IMR-90 (cell line): ENCODE measurements at regions of chr6 and their contacts with region 1.

Region 1: GRCh38 chr6:100116411-100117194 is 122.6 kb upstream of the MCHR2 start:
- DNase-seq: peak; percentile 76
- ATAC-seq: peak; percentile 88
- H3K4me3 ChIP-seq: no peak overlapping the region
- H3K27ac ChIP-seq: no peak overlapping the region
- H3K4me1 ChIP-seq: no peaks in the 10 kb centered on the region
- H3K27me3 ChIP-seq: peaks cover 47% of the 10 kb centered on the region
- CTCF ChIP-seq: peak; percentile 87
- POLR2A ChIP-seq: peak; percentile 30; the same call in 1 of the 2 replicates
- RAD21 ChIP-seq: peak; percentile 94

Region 2: GRCh38 chr6:100228831-100229641 is 112.4 kb after region 1 on chr6:
- CTCF ChIA-PET with region 1: no interaction called
- POLR2A ChIA-PET with region 1: no interaction called
- dilution Hi-C with region 1: no loop called
- in situ Hi-C with region 1: no loop called
- intact Hi-C with region 1: loop called (anchors 10 kb)
- DNase-seq: peak; percentile 57
- ATAC-seq: peak; percentile 98
- H3K4me3 ChIP-seq: peak overlapping the region; percentile 63
- H3K27ac ChIP-seq: peak overlapping the region; percentile 76
- H3K4me1 ChIP-seq: peaks cover 2% of the 10 kb centered on the region; the same call in 1 of the 2 replicates
- H3K27me3 ChIP-seq: no peaks in the 10 kb centered on the region
- CTCF ChIP-seq: peak; percentile 16; the same call in 1 of the 2 replicates
- POLR2A ChIP-seq: no peak
- RAD21 ChIP-seq: no peak

Region 3: GRCh38 chr6:100246206-100246605 is 129.6 kb after region 1 on chr6:
- CTCF ChIA-PET with region 1: no interaction called
- POLR2A ChIA-PET with region 1: no interaction called
- dilution Hi-C with region 1: no loop called
- in situ Hi-C with region 1: no loop called
- intact Hi-C with region 1: no loop called
- DNase-seq: no peak
- ATAC-seq: no peak
- H3K4me3 ChIP-seq: no peak overlapping the region
- H3K27ac ChIP-seq: no peak overlapping the region
- H3K4me1 ChIP-seq: no peaks in the 10 kb centered on the region
- H3K27me3 ChIP-seq: no peaks in the 10 kb centered on the region
- CTCF ChIP-seq: no peak
- POLR2A ChIP-seq: no peak
- RAD21 ChIP-seq: no peak

Region 4: DNA sequence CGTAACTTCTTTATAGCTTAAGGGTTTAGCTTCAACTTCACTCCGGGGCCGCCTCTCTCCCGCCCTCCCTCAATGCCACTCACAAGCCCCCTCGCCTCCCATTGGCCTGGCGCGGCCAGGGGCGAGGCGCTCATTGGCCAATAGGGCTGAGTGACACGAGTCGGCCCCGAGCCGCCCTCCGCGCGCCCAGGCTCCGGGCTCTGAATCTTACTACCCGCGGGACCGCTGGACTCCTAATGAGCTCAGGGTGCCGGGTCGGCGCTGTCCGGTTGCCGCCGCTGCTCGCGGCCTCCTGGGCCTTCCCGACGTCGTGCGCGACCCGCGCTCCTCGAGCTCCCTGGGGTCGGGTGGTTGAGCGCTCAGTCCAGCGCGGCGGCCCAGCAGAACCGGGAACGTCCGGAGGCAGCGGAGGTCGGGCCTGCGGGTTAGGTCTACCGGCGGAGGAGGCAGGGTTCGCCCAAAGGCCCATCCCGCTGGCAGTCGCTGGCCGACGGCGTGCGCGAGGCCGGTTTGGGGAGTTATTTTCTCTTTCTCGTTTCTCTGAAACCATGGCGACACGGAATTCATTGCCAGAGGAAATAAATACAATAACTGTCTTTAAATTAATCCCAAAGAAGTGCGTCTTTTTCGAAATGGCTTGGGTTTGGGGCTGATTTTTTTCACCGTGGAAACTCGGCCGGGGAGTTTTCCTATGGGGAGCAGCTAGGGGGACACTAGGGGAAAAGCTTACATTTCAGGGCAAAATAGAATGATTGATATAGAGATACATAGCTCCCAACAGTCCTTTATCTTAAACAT is 348.5 kb after region 1 on chr6 and contains the start of gene SIM1:
- CTCF ChIA-PET with region 1: interaction called, 6 read pairs
- POLR2A ChIA-PET with region 1: no interaction called
- dilution Hi-C with region 1: loop called (anchors 25 kb)
- in situ Hi-C with region 1: no loop called
- intact Hi-C with region 1: no loop called
- DNase-seq: peak; percentile 59
- ATAC-seq: peak; percentile 92
- H3K4me3 ChIP-seq: peak within 1 kb of the TSS; percentile 41
- H3K27ac ChIP-seq: no peak within 1 kb of the TSS
- H3K4me1 ChIP-seq: peaks cover 5% of the 10 kb centered on the region; the same call in 1 of the 2 replicates
- H3K27me3 ChIP-seq: peaks cover 95% of the 10 kb centered on the region
- CTCF ChIP-seq: no peak
- POLR2A ChIP-seq: no peak
- RAD21 ChIP-seq: no peak
- total RNA-seq, gene SIM1: not detected in 2 replicates

Region 5: DNA sequence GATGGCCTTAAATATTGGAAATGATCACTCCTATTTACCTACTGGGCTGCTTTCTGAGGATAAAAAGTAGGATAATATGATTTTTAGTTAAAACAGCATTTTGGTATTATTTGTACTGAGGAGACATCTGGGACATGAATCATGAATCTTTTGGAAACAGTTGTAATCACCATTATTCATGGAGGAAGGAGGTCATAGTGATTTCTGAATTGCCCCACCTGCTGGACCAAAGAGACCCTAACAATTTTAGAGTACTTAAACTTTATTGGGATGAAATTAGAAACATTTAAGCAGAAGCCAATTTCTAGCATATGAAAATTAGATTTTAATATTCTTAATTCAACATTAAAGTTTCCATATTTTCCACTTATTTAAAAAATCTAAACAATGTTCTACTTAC is 456.6 kb after region 1 on chr6:
- CTCF ChIA-PET with region 1: no interaction called
- POLR2A ChIA-PET with region 1: no interaction called
- dilution Hi-C with region 1: no loop called
- in situ Hi-C with region 1: no loop called
- intact Hi-C with region 1: loop called (anchors 1 kb)
- DNase-seq: peak; percentile 65
- ATAC-seq: no peak
- H3K4me3 ChIP-seq: no peak overlapping the region
- H3K27ac ChIP-seq: no peak overlapping the region
- H3K4me1 ChIP-seq: no peaks in the 10 kb centered on the region
- H3K27me3 ChIP-seq: no peaks in the 10 kb centered on the region
- CTCF ChIP-seq: peak; percentile 54
- POLR2A ChIP-seq: no peak
- RAD21 ChIP-seq: peak; percentile 41

Region 6: DNA sequence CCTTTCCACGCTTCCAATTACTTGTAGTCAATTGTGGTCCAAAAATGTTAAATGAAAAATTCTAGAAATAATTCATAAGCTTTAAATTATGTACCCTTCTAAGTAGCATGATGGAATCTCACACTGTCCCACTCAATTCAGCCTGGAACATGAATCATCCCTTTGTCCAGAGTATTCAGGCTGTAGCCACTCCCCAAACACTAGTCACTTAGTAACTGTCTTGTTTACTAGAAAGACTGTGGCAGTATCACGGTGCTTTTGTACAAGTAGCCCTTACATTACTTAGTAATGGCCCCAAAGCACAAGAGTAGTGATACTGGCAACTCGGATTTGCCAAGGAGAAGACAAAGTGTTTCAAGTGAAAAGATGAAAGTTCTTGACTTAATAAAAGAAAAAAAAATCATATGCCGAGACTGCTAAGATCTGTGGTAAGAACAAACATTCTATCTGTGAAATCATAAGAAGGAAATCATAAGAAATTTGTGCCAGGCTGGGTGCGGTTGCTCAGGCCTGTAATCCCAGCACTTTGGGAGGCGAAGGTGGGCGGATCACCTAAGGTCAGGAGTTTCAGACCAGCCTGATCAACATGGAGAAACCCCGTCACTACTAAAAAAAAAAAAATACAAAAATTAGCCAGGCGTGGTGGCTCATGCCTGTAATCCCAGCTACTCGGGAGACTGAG is 516.6 kb after region 1 on chr6:
- CTCF ChIA-PET with region 1: no interaction called
- POLR2A ChIA-PET with region 1: no interaction called
- dilution Hi-C with region 1: loop called (anchors 25 kb)
- in situ Hi-C with region 1: no loop called
- intact Hi-C with region 1: no loop called
- DNase-seq: peak; percentile 83
- ATAC-seq: peak; percentile 95
- H3K4me3 ChIP-seq: no peak overlapping the region
- H3K27ac ChIP-seq: no peak overlapping the region
- H3K4me1 ChIP-seq: no peaks in the 10 kb centered on the region
- H3K27me3 ChIP-seq: no peaks in the 10 kb centered on the region
- CTCF ChIP-seq: no peak
- POLR2A ChIP-seq: no peak
- RAD21 ChIP-seq: 0 out of 2 replicates have a peak, but pooled peaks have one; percentile 7

Region 7: GRCh38 chr6:100664274-100665040 is 547.9 kb after region 1 on chr6:
- CTCF ChIA-PET with region 1: interaction called, 4 read pairs
- POLR2A ChIA-PET with region 1: no interaction called
- dilution Hi-C with region 1: no loop called
- in situ Hi-C with region 1: loop called (anchors 10 kb)
- intact Hi-C with region 1: loop called (anchors 2 kb)
- DNase-seq: peak; percentile 57
- ATAC-seq: peak; percentile 30
- H3K4me3 ChIP-seq: no peak overlapping the region
- H3K27ac ChIP-seq: no peak overlapping the region
- H3K4me1 ChIP-seq: no peaks in the 10 kb centered on the region
- H3K27me3 ChIP-seq: no peaks in the 10 kb centered on the region
- CTCF ChIP-seq: peak; percentile 64
- POLR2A ChIP-seq: no peak
- RAD21 ChIP-seq: peak; percentile 63

Region 8: DNA sequence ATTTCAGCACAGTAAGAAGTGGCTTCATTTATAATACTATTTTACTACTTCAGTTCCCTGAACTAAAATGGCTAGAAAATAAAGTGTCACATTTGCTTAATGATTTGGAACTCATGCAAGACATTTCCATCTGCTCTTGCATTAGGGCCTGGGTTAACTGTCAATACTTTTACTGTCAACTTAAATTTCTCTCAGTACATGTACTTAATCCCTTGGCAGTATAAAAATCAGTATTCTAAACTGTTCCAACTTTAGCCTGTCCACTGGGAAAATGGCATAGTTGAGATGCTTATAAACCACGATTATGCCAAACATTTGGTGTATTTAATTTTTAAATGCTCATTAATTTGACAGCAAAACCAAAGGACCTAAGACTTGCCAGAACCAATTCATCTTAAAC is 610.1 kb after region 1 on chr6:
- CTCF ChIA-PET with region 1: no interaction called
- POLR2A ChIA-PET with region 1: no interaction called
- dilution Hi-C with region 1: no loop called
- in situ Hi-C with region 1: no loop called
- intact Hi-C with region 1: loop called (anchors 5 kb)
- DNase-seq: peak; percentile 36
- ATAC-seq: peak; percentile 69
- H3K4me3 ChIP-seq: no peak overlapping the region
- H3K27ac ChIP-seq: no peak overlapping the region
- H3K4me1 ChIP-seq: no peaks in the 10 kb centered on the region
- H3K27me3 ChIP-seq: no peaks in the 10 kb centered on the region
- CTCF ChIP-seq: no peak
- POLR2A ChIP-seq: no peak
- RAD21 ChIP-seq: no peak